A673 (cell line): ENCODE measurements at regions of chr11 and their contacts with region 1.

Region 1: GRCh38 chr11:94876645-94877442 is 96.5 kb downstream of the CWC15 start:
- DNase-seq: peak; percentile 95
- H3K4me3 ChIP-seq: no peak overlapping the region
- H3K27ac ChIP-seq: peak overlapping the region; percentile 86
- H3K4me1 ChIP-seq: peaks cover 23% of the 10 kb centered on the region
- H3K27me3 ChIP-seq: no peaks in the 10 kb centered on the region
- CTCF ChIP-seq: peak; percentile 52

Region 2: DNA sequence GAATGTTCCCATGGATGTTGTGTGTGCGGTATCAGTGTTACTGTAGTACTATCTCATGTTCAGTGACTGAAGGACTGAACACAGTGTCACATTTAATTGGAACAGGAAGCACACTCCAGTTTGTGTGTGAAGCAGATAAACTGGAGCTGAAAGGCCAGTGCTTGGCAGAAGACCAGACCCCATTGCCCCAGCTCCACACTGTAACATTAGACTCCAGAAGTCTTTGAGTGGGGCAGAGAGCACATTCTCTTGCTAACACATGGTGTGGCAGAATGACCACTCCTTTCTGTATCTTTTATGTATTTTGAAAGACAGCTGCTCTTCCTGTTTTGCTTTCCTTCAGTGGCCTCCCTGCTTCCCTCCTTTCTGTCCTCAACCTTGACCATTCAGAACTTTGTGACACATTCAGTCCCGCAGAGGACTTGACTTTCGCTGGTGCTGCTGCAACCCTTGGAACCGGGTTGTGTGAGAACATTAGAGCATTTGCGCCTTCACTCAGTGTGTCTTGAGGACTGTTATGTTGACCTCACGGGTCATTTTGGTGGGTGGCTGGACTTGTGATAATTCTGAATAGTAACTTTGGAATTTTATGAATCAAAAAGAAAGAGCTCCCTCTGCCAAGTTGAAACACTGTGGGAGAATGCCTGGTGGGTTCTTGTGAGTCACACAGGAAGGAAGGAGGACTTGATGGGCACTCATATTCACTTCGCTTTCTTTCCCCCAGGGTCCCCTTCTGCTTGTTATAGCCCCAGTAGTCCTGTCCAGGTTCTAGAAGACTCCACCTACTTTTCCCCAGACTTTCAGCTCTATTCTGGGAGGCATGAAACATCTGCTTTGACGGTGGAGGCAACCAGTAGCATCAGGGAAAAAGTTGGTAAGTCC is 82.3 kb before region 1 on chr11:
- CTCF ChIA-PET with region 1: no interaction called
- POLR2A ChIA-PET with region 1: no interaction called
- intact Hi-C with region 1: loop called (anchors 5 kb)
- DNase-seq: peak; percentile 94
- H3K4me3 ChIP-seq: no peak overlapping the region
- H3K27ac ChIP-seq: peak overlapping the region; percentile 74
- H3K4me1 ChIP-seq: peaks cover 44% of the 10 kb centered on the region
- H3K27me3 ChIP-seq: no peaks in the 10 kb centered on the region
- CTCF ChIP-seq: no peak